Activated CD4-positive, alpha-beta memory T cell treated with anti-CD3 and anti-CD28 coated beads, Interleukin-2, amount 10 ng/mL, durations not matched to agents 7 days and 5 days (primary cell): ENCODE measurements at regions of chr19 and their contacts with region 1.

Region 1: GRCh38 chr19:33521480-33522370 is at the start of gene PEPD:
- DNase-seq: peak; percentile 87
- H3K4me3 Mint-ChIP-seq: peak within 1 kb of the TSS; percentile 79
- H3K27ac Mint-ChIP-seq: no peak within 1 kb of the TSS
- H3K4me1 Mint-ChIP-seq: peaks cover 32% of the 10 kb centered on the region
- H3K27me3 Mint-ChIP-seq: peaks cover 2% of the 10 kb centered on the region
- total RNA-seq, gene PEPD: 33.3 to 36.6 TPM

Region 2: GRCh38 chr19:33509796-33510213 is 11.9 kb before region 1 on chr19:
- CTCF ChIA-PET with region 1: no interaction called
- POLR2A ChIA-PET with region 1: interaction called, 14 read pairs
- DNase-seq: no peak
- H3K4me3 Mint-ChIP-seq: no peak overlapping the region
- H3K27ac Mint-ChIP-seq: no peak overlapping the region
- H3K4me1 Mint-ChIP-seq: peaks cover 16% of the 10 kb centered on the region
- H3K27me3 Mint-ChIP-seq: no peaks in the 10 kb centered on the region